ENCODE measurements at regions of chr3 and their contacts with region 1.

Region 1: DNA sequence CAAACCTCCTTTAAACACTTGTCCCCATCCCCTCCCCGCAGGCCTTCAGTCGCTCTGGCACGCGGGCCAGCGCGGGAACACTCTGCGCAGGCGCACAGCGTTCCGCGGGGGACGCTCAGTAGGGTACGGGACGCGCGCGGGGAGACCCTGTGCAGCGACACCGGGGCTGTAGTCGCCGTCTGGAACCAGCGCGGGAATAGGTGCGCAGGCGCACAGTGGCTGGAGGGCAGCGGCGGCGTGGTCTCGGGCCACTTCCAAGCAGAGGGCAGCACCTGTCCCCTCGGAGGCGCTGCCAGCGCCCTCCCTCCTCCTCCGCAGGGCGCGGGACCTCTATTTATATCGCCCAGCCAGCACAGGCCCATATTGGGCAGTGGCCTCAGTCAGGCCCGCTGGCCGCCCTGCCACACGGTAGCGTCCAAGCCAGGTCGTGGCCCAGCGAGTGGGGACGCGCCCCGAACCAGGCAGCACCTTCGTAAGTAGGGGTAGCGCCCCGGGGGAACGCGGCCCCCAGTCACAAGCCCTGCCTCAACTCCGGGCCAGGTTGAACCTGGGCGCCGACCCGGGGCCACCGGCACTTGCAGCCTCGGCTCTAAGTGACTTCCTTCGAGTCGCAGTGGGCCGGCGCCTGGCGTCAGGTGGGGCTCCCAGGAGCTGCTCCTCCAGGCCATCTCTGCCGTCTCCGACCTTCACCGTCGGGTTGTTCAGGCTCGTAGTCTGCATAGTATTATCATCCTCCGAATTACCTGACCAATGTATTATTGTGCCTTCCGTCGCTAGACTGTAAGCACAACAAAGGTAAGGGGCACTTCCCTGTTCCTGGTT is at the start of gene KBTBD12:
- DNase-seq: peak; percentile 79 to 94
- ATAC-seq: peak; percentile 97 to 99 (median 98)
- H3K4me3 ChIP-seq: peak within 1 kb of the TSS; percentile 75
- H3K27ac ChIP-seq: peak within 1 kb of the TSS; percentile 97
- H3K4me1 ChIP-seq: peaks cover 42% of the 10 kb centered on the region
- H3K27me3 ChIP-seq: no peaks in the 10 kb centered on the region
- CTCF ChIP-seq: no peak
- total RNA-seq, gene KBTBD12: 20.6 to 47.5 (median 29.5) TPM

Region 2: DNA sequence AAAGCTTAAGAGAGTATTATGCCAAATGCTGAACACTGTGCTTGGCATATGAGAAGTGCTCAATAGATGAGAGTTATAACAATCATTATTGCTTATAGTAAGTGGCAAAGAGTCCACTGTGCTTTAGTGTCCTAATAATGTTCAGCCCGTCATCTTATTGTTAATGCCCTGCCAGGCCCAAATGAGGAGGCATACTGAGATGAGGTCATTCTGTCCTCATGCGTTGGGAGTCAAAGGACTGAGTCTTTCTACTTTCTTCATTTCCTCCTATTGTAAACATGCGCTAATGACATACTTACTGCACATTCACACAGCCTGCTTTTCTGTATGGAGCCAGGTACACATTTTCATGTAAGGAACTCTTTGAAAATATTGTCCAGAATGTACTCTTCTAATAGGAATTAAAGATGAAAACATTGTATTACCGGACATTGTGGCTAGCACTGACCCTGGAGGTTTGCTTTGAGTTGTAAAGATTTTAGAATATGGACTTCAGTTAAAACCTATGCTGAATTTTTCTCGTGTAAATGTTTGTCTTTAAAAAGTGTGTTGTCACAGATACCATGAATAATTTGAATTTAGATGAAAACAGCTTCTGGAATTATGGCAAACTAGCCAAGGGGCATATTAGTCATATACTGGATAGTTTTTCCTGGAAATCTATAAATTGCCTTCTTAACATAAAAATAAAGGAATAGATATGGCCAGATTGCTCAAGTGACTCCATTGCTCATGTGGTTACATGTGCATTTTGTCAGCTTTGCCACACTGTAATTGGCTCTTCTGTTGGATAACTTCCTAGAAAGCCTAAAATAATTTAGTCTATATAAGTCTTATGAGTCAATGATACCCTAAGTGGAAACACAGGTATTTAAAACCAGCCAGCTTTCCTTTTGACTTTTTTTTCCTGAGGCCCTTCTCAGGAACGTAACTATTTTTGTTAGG is 38.0 kb after region 1 on chr3:
- intact Hi-C with region 1: loop called in 1 of 2 experiments (anchors 5 kb)
- DNase-seq: no peak
- ATAC-seq: peak; percentile 69 to 89 (median 84)
- H3K4me3 ChIP-seq: peak overlapping the region; percentile 35
- H3K27ac ChIP-seq: peak overlapping the region; percentile 92
- H3K4me1 ChIP-seq: peaks cover 69% of the 10 kb centered on the region
- H3K27me3 ChIP-seq: no peaks in the 10 kb centered on the region
- CTCF ChIP-seq: no peak